ENCODE measurements at regions of chr22 and their contacts with region 1.

Region 1: DNA sequence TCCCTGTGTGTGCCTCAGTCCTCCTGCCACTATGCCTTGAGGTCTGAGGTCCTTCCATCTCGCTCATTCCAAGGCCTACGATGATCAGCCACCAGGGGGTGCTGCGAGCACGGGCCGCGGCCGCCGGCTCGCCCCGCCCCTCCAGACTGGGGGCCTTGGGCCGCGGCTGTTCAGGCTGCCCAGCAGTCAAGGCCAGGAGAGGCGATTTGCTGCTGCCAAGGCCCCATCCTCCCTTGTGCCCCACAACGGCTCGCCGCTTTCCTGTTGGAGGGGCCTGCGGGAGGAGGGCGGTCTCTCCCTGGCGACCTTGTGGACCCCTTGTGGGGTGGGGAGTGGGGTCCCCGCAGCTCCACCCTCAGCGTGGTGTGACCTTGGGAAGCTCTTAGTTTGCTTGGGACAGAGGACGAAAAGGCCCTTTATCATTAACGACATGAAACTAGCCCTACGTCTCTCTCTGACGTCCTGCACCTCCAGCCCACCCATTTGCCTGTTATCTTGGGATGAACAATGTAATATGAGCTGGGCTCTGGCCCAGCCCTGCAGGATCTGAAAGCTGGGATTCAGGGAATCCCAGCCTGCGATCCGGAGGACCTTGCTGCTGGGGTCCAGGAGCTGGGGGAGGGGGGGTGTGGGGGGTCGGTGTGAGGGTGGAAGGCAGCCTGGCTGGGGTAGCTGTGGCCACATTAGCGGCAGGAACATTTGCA is 5.3 kb upstream of the GALR3 start:
- DNase-seq: peak; percentile 67 to 92
- ATAC-seq: peak; percentile 83

Region 2: GRCh38 chr22:37965940-37966664 is 148.2 kb after region 1 on chr22:
- intact Hi-C with region 1: loop called in 1 of 2 experiments (anchors 5 kb)
- DNase-seq: no peak
- ATAC-seq: no peak